ENCODE measurements at regions of chr10 and their contacts with region 1.

Region 1: DNA sequence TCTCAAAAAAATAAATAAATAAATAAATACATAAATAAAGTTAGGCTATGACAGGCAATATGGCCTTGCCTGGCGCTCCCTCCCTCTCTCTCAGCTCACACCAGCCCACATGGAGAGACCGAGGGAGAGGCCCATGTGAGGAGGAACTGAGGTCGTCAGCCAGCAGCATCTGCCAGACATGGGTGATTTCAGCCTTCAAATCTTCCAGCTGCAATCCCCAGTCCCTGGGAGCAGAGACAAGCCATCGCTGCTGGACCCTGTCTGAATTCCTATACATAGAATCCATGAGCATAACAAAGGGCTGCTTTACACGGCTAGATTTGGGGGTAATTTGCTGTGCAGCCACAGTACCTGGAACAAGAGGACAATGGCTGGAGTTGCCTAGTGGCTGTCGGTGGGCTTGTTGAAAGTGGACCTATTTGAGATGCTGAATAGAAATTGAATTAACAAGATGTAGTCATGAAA is 35.6 kb downstream of the ANKRD16 start:
- DNase-seq: no peak
- ATAC-seq: no peak
- H3K4me3 Mint-ChIP-seq: no peak overlapping the region
- H3K27ac Mint-ChIP-seq: peak overlapping the region; percentile 15
- H3K4me1 Mint-ChIP-seq: peaks cover 47% of the 10 kb centered on the region
- H3K27me3 Mint-ChIP-seq: no peaks in the 10 kb centered on the region
- CTCF ChIP-seq: no peak

Region 2: GRCh38 chr10:5832936-5833335 is 21.2 kb before region 1 on chr10:
- CTCF ChIA-PET with region 1: no interaction called
- POLR2A ChIA-PET with region 1: interaction called, 12 read pairs
- intact Hi-C with region 1: no loop called
- DNase-seq: no peak
- ATAC-seq: no peak
- H3K4me3 Mint-ChIP-seq: no peak overlapping the region
- H3K27ac Mint-ChIP-seq: no peak overlapping the region
- H3K4me1 Mint-ChIP-seq: peaks cover 21% of the 10 kb centered on the region
- H3K27me3 Mint-ChIP-seq: no peaks in the 10 kb centered on the region
- CTCF ChIP-seq: no peak

Region 3: GRCh38 chr10:5840314-5841307 is 13.5 kb before region 1 on chr10:
- CTCF ChIA-PET with region 1: interaction called, 10 read pairs
- POLR2A ChIA-PET with region 1: interaction called, 107 read pairs
- intact Hi-C with region 1: loop called (anchors 1 kb)
- DNase-seq: peak; percentile 78
- ATAC-seq: peak; percentile 83
- H3K4me3 Mint-ChIP-seq: peak overlapping the region; percentile 84
- H3K27ac Mint-ChIP-seq: peak overlapping the region; percentile 98
- H3K4me1 Mint-ChIP-seq: peaks cover 79% of the 10 kb centered on the region
- H3K27me3 Mint-ChIP-seq: no peaks in the 10 kb centered on the region
- CTCF ChIP-seq: no peak

Region 4: DNA sequence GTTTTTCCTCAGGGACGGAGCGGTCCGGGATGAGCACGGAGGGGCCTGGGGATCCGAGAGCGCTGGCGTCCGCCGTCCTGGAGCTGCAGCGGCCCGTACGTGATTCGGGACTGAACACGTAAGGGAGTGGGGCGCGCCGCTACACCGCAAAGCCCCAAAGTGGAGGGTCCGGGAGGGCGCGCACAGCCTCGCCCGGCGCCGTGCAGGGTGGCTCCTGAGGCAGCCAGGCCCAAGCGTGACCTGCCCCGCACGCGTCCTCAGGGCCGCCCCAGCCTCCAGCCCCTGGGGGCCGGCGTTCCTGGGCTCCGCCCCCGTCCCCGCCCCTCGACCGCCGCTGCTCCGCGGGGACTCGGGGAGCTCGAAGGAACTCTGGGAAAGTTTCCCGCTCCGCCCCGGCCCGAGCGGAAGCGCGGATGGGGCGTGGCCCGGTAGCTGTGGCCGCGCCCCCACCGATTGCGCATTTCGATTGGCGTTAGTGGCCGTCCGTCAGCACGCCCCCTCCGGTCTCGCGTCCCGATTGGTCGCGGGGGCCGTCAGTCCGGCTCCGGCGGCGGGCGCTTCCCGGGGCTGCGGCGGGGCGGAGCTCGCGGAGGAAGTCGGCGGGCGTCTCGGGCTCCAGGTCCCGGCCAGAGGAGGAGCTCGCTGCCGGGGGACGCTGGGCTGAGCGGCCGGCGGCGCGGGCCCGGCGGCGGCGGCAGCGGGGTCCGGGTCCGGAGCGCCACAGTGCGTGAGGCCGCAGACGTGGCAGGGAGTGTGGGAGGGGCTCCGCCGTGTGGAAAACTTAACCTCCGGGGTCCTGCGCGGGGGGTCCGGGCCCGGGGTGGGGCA is 35.7 kb after region 1 on chr10 and contains the starts of genes ANKRD16 and FBH1:
- CTCF ChIA-PET with region 1: no interaction called
- POLR2A ChIA-PET with region 1: interaction called, 13 read pairs
- intact Hi-C with region 1: loop called (anchors 2 kb)
- DNase-seq: peak; percentile 100
- ATAC-seq: peak; percentile 85
- H3K4me3 Mint-ChIP-seq: peak within 1 kb of the TSS; percentile 87
- H3K27ac Mint-ChIP-seq: peak within 1 kb of the TSS; percentile 78
- H3K4me1 Mint-ChIP-seq: peaks cover 59% of the 10 kb centered on the region
- H3K27me3 Mint-ChIP-seq: no peaks in the 10 kb centered on the region
- CTCF ChIP-seq: no peak
- total RNA-seq, gene ANKRD16: 9.2 and 11.1 TPM in 2 replicates
- total RNA-seq, gene FBH1: 65.5 and 68.7 TPM in 2 replicates

Measured in activated B cell treated with CpG ODN at 0.5 μM for 24 hours (primary cell).